ENCODE measurements at regions of chr3 and their contacts with region 1.

Region 1: DNA sequence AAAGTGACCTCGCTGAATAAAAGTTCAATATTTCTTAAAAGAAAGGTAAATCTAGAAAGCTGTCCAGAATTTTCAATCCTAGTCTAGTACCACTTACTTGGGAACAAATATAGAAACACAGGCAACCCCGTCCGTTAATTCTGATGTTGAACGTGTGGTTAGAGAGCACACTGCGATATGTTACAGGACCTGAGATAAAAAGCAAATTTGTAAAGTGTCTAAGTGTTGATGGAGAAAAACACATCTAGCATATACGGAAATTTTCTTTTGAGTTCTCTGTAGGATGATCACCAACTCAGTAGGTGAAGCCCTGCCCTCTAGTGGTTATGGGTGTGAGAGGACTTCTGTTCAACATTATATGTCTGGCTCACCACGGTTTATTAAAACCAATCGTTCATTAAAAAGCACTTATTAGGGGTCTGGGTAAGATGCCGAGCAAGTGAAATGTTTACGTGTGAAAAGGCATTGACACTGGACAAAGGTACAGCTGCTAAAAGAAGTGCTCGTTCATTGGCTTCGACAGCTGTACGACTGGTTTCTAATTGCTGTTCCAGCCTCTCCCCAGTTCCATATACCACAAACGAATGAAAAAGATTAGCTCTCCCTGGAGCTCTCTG is 1.0 kb upstream of the ATP2C1 start:
- DNase-seq: peak; percentile 21 to 89 (median 61)
- ATAC-seq: peak; percentile 63
- H3K4me3 ChIP-seq: peak overlapping the region; percentile 68 to 80
- H3K4me3 Mint-ChIP-seq: peak overlapping the region; percentile 98
- H3K27ac ChIP-seq: peak overlapping the region; percentile 86 to 87
- H3K27ac Mint-ChIP-seq: peak overlapping the region; percentile 99
- H3K4me1 ChIP-seq: peaks cover 27% of the 10 kb centered on the region
- H3K4me1 Mint-ChIP-seq: peaks cover 33% of the 10 kb centered on the region
- H3K27me3 ChIP-seq: no peaks in the 10 kb centered on the region
- H3K27me3 Mint-ChIP-seq: no peaks in the 10 kb centered on the region
- CTCF ChIP-seq: peak; percentile 87

Region 2: GRCh38 chr3:129399145-129399894 is 1493.5 kb before region 1 on chr3:
- CTCF ChIA-PET with region 1: no interaction called
- POLR2A ChIA-PET with region 1: no interaction called
- intact Hi-C with region 1: loop called in 1 of 2 experiments (anchors 10 kb)
- DNase-seq: peak; percentile 40 to 96 (median 73)
- ATAC-seq: peak; percentile 83
- H3K4me3 ChIP-seq: peak overlapping the region; percentile 63 to 72
- H3K4me3 Mint-ChIP-seq: peak overlapping the region; percentile 98
- H3K27ac ChIP-seq: peak overlapping the region; percentile 73 to 88
- H3K27ac Mint-ChIP-seq: peak overlapping the region; percentile 99
- H3K4me1 ChIP-seq: peaks cover 12% of the 10 kb centered on the region
- H3K4me1 Mint-ChIP-seq: peaks cover 42% of the 10 kb centered on the region
- H3K27me3 ChIP-seq: no peaks in the 10 kb centered on the region
- H3K27me3 Mint-ChIP-seq: no peaks in the 10 kb centered on the region
- CTCF ChIP-seq: peak; percentile 78

Region 3: GRCh38 chr3:130699765-130700164 is 193.1 kb before region 1 on chr3:
- CTCF ChIA-PET with region 1: interaction called, 5 read pairs
- POLR2A ChIA-PET with region 1: no interaction called
- intact Hi-C with region 1: loop called (anchors 1 to 2 kb)
- DNase-seq: peak in 2 of 9 experiments; percentile 9 to 33
- ATAC-seq: no peak
- H3K4me3 ChIP-seq: no peak overlapping the region
- H3K4me3 Mint-ChIP-seq: no peak overlapping the region
- H3K27ac ChIP-seq: no peak overlapping the region
- H3K27ac Mint-ChIP-seq: no peak overlapping the region
- H3K4me1 ChIP-seq: no peaks in the 10 kb centered on the region
- H3K4me1 Mint-ChIP-seq: no peaks in the 10 kb centered on the region
- H3K27me3 ChIP-seq: no peaks in the 10 kb centered on the region
- H3K27me3 Mint-ChIP-seq: no peaks in the 10 kb centered on the region
- CTCF ChIP-seq: no peak

Region 4: DNA sequence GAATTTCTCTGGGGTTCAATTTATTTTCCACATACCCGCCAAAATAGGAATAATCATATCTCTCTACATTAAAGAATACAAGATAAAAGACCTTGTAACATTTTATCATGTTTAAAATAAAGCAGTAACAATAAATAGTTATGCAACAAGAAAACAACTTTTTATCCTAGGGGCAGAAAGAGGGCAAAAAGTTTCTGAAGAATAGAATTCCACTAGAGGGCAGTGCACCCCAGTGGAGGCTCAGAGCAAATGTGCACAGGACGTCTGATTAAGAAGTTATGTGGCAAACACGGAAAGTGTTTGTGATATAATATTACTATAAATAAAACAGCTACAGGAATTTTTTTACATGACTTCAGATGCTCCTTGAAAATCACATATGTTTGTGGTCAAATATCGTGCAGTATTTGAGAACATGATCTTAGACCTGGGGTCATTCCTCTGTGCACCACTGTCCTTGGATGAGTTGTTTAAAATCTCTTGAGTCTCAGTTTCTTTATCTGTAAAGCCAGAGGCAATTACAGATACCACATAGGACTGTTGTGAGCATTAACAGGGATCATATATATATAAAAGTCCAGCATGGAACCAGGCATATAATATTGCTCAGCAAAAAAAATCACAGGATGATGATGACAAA is 133.0 kb before region 1 on chr3:
- CTCF ChIA-PET with region 1: interaction called, 42 read pairs
- POLR2A ChIA-PET with region 1: no interaction called
- intact Hi-C with region 1: loop called (anchors 1 kb)
- DNase-seq: peak in 8 of 9 experiments; percentile 16 to 72 (median 54)
- ATAC-seq: peak; percentile 66
- H3K4me3 ChIP-seq: no peak overlapping the region
- H3K4me3 Mint-ChIP-seq: no peak overlapping the region
- H3K27ac ChIP-seq: no peak overlapping the region
- H3K27ac Mint-ChIP-seq: no peak overlapping the region
- H3K4me1 ChIP-seq: no peaks in the 10 kb centered on the region
- H3K4me1 Mint-ChIP-seq: no peaks in the 10 kb centered on the region
- H3K27me3 ChIP-seq: no peaks in the 10 kb centered on the region
- H3K27me3 Mint-ChIP-seq: peaks cover 7% of the 10 kb centered on the region
- CTCF ChIP-seq: peak; percentile 93

Region 5: GRCh38 chr3:130925628-130926027 is 32.8 kb after region 1 on chr3:
- CTCF ChIA-PET with region 1: no interaction called
- POLR2A ChIA-PET with region 1: no interaction called
- intact Hi-C with region 1: no loop called
- DNase-seq: no peak
- ATAC-seq: no peak
- H3K4me3 ChIP-seq: no peak overlapping the region
- H3K4me3 Mint-ChIP-seq: no peak overlapping the region
- H3K27ac ChIP-seq: no peak overlapping the region
- H3K27ac Mint-ChIP-seq: no peak overlapping the region
- H3K4me1 ChIP-seq: no peaks in the 10 kb centered on the region
- H3K4me1 Mint-ChIP-seq: peaks cover 53% of the 10 kb centered on the region
- H3K27me3 ChIP-seq: no peaks in the 10 kb centered on the region
- H3K27me3 Mint-ChIP-seq: no peaks in the 10 kb centered on the region
- CTCF ChIP-seq: no peak

Region 6: GRCh38 chr3:131026321-131027178 is 133.7 kb after region 1 on chr3 and contains the starts of genes ASTE1 and NEK11:
- CTCF ChIA-PET with region 1: no interaction called
- POLR2A ChIA-PET with region 1: interaction called, 17 read pairs
- intact Hi-C with region 1: loop called (anchors 1 to 5 kb)
- DNase-seq: peak; percentile 88 to 95 (median 92)
- ATAC-seq: peak; percentile 96
- H3K4me3 ChIP-seq: peak within 1 kb of the TSS; percentile 90 to 97
- H3K4me3 Mint-ChIP-seq: peak within 1 kb of the TSS; percentile 94
- H3K27ac ChIP-seq: peak within 1 kb of the TSS; percentile 91 to 96
- H3K27ac Mint-ChIP-seq: peak within 1 kb of the TSS; percentile 99
- H3K4me1 ChIP-seq: peaks cover 49% of the 10 kb centered on the region
- H3K4me1 Mint-ChIP-seq: peaks cover 52% of the 10 kb centered on the region
- H3K27me3 ChIP-seq: no peaks in the 10 kb centered on the region
- H3K27me3 Mint-ChIP-seq: no peaks in the 10 kb centered on the region
- CTCF ChIP-seq: no peak
- total RNA-seq, gene ASTE1: 24.6 to 25.9 TPM
- total RNA-seq, gene NEK11: 3.6 to 3.8 TPM

Region 7: DNA sequence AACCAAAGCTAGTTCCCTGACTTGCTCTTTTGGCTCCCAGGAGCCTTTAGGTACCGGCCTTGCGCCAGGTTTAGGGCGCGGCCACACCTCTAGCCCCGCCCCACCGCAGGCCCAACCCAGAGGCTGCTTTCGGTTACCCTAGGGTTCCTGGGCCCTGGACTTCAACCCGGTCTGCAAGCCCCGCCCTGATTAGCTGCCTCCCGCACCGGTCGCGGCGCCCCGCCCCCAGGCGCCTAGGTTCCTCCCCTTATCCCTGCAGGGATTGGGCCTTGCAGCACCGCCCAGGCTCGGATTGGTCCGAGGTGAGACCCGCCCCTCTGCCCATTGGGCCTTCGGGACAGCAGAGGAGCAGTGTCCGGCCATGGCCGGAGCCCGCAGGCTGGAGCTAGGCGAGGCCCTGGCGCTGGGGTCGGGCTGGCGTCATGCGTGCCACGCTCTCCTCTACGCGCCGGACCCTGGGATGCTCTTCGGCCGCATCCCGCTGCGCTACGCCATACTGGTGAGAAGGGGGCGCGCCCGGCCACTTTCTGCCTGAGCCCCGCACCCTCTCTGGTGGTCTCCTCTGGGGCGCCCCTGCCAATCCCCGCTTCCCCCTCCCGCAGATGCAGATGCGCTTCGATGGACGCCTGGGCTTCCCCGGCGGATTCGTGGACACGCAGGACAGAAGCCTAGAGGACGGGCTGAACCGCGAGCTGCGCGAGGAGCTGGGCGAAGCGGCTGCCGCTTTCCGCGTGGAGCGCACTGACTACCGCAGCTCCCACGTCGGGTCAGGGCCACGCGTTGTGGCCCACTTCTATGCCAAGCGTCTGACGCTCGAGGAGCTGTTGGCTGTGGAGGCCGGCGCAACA is 488.8 kb after region 1 on chr3 and contains the start of gene NUDT16:
- CTCF ChIA-PET with region 1: no interaction called
- POLR2A ChIA-PET with region 1: no interaction called
- intact Hi-C with region 1: loop called (anchors 1 to 5 kb)
- DNase-seq: peak; percentile 92 to 97 (median 95)
- ATAC-seq: peak; percentile 96
- H3K4me3 ChIP-seq: peak within 1 kb of the TSS; percentile 86 to 94
- H3K4me3 Mint-ChIP-seq: peak within 1 kb of the TSS; percentile 96
- H3K27ac ChIP-seq: peak within 1 kb of the TSS; percentile 45 to 64
- H3K27ac Mint-ChIP-seq: peak within 1 kb of the TSS; percentile 91
- H3K4me1 ChIP-seq: peaks cover 13% of the 10 kb centered on the region
- H3K4me1 Mint-ChIP-seq: peaks cover 31% of the 10 kb centered on the region
- H3K27me3 ChIP-seq: no peaks in the 10 kb centered on the region
- H3K27me3 Mint-ChIP-seq: no peaks in the 10 kb centered on the region
- CTCF ChIP-seq: no peak
- total RNA-seq, gene NUDT16: 3.1 to 3.5 TPM

Region 8: GRCh38 chr3:131502530-131503245 is 609.8 kb after region 1 on chr3 and contains the start of gene MRPL3:
- CTCF ChIA-PET with region 1: no interaction called
- POLR2A ChIA-PET with region 1: no interaction called
- intact Hi-C with region 1: loop called (anchors 2 to 5 kb)
- DNase-seq: peak; percentile 67 to 92 (median 84)
- ATAC-seq: peak; percentile 88
- H3K4me3 ChIP-seq: peak within 1 kb of the TSS; percentile 74 to 95
- H3K4me3 Mint-ChIP-seq: peak within 1 kb of the TSS; percentile 97
- H3K27ac ChIP-seq: peak within 1 kb of the TSS; percentile 78 to 83
- H3K27ac Mint-ChIP-seq: peak within 1 kb of the TSS; percentile 95
- H3K4me1 ChIP-seq: peaks cover 27% of the 10 kb centered on the region
- H3K4me1 Mint-ChIP-seq: peaks cover 45% of the 10 kb centered on the region
- H3K27me3 ChIP-seq: no peaks in the 10 kb centered on the region
- H3K27me3 Mint-ChIP-seq: no peaks in the 10 kb centered on the region
- CTCF ChIP-seq: no peak
- total RNA-seq, gene MRPL3: 43.6 to 45.0 TPM